ENCODE measurements at regions of chr2 and their contacts with region 1.

Region 1: GRCh38 chr2:20962939-20963557 is 80.8 kb downstream of the APOB start:
- DNase-seq: peak; percentile 69
- H3K4me3 ChIP-seq: no peak overlapping the region
- H3K27ac ChIP-seq: no peak overlapping the region
- H3K4me1 ChIP-seq: no peaks in the 10 kb centered on the region
- H3K27me3 ChIP-seq: peaks cover 8% of the 10 kb centered on the region
- CTCF ChIP-seq: peak; percentile 82 to 87 (median 85)
- EP300 ChIP-seq: no peak
- POLR2A ChIP-seq: no peak

Region 2: GRCh38 chr2:20378792-20379519 is 584.1 kb before region 1 on chr2:
- in situ Hi-C with region 1: loop called in 1 of 4 experiments (anchors 25 kb)
- intact Hi-C with region 1: no loop called
- DNase-seq: peak; percentile 83
- H3K4me3 ChIP-seq: no peak overlapping the region
- H3K27ac ChIP-seq: peak overlapping the region; percentile 62 to 75 (median 68)
- H3K4me1 ChIP-seq: peaks cover 14 to 35% (median 27%) of the 10 kb centered on the region in 4 donors
- H3K27me3 ChIP-seq: no peaks in the 10 kb centered on the region
- CTCF ChIP-seq: peak; percentile 63 to 77 (median 77)
- EP300 ChIP-seq: no peak
- POLR2A ChIP-seq: no peak

Region 3: DNA sequence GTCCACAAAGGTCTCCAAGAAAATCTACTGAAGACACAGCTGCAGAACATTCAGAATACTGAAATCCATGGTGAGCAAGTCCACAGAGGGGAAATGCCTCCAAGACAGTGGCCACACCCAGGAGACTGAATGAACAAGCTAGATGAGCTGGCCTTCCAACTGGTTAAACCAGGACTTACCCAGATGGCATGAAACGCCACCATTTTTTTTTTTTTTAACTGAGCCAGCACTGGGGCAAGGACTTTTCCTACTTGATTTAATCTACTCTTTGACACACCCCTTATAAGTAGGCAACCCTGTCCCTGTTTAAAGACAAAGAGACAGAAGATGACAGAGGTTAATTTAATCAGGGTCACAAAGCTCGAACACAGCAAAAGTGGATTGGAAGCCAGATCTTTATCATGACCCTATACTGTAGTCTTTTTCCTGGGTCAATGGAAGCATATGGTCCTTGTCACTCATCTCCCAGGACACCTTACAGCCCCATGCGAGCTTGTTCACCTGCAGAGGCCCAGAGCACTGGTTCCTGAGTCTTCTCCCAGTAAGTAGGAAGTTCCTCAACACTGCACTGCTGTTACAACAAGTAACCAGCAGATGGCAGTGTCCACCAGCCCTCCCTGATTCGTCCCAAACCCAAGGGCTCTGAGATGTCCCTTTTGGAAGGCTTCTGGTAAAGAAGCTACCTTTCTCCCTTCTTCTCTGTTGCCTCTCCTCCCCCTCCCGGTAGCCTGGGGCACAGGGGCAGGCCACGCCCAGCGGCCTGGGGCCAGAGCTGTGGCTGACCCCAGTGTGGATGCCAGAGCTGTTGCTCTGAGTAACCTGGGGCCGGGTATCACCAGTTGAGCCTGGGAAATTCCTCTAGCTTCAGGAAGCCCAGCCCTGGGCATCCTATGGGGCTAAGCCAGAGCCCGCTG is 301.7 kb before region 1 on chr2:
- in situ Hi-C with region 1: loop called (anchors 5 to 10 kb)
- intact Hi-C with region 1: loop called (anchors 1 kb)
- DNase-seq: peak; percentile 73
- H3K4me3 ChIP-seq: no peak overlapping the region
- H3K27ac ChIP-seq: no peak overlapping the region
- H3K4me1 ChIP-seq: peaks cover 12 to 19% (median 13%) of the 10 kb centered on the region in 4 donors
- H3K27me3 ChIP-seq: peaks cover 63% of the 10 kb centered on the region
- CTCF ChIP-seq: peak; percentile 93 to 99 (median 96)
- EP300 ChIP-seq: no peak
- POLR2A ChIP-seq: no peak

Region 4: DNA sequence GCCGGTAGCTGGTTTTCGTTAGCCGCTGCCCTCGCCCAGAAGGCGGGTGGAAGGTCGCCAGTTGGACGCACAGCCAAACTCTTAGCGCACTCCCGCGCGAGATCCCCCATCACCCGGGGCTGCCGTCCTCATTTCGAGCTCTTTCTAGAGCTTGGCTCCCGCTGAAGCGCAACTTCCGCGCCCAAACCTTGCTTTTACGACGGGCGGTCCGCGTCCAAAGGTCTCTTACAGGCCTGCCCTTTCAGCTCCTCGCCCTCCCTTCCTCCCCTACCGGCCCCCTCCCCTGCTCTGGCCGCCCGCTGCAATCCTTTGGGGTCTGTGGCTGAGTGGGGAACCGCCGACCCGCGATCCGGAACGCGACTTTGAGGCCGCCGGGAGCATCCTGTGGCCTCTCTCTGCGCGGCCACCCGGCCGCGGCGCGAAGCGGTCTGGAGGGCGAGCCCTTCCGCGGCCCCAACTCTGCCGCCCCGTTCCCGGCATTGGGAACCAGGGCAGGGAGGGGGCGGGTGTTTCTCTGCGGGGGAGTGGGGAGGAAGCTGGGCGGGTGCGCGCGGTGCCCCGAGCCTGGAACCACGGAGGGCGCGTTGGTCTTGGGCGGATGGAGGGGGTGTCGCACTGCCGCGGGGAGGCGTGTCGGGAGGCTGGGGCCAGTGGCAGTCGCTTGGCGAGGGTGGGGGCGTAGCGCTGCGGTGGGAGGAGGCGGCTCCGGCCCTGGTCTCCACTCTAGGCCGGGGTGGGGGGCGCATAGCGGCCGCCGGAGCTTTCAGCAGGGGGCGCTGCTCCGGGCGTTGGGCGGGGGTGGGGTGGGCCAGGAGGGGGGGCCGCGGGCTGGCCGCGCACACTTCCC is 296.5 kb before region 1 on chr2 and contains the start of gene GDF7:
- in situ Hi-C with region 1: loop called (anchors 5 to 10 kb)
- intact Hi-C with region 1: loop called (anchors 2 kb)
- DNase-seq: peak; percentile 60
- H3K4me3 ChIP-seq: peak within 1 kb of the TSS; percentile 19 to 55 (median 34)
- H3K27ac ChIP-seq: peak within 1 kb of the TSS in 1 of 4 donors; percentile 43
- H3K4me1 ChIP-seq: peaks cover 16 to 38% (median 24%) of the 10 kb centered on the region in 4 donors
- H3K27me3 ChIP-seq: peaks cover 98% of the 10 kb centered on the region
- CTCF ChIP-seq: peak in 1 of 5 experiments; percentile 9
- EP300 ChIP-seq: no peak
- POLR2A ChIP-seq: no peak
- total RNA-seq, gene GDF7: 0.20 to 1.1 (median 0.58) TPM

Region 5: DNA sequence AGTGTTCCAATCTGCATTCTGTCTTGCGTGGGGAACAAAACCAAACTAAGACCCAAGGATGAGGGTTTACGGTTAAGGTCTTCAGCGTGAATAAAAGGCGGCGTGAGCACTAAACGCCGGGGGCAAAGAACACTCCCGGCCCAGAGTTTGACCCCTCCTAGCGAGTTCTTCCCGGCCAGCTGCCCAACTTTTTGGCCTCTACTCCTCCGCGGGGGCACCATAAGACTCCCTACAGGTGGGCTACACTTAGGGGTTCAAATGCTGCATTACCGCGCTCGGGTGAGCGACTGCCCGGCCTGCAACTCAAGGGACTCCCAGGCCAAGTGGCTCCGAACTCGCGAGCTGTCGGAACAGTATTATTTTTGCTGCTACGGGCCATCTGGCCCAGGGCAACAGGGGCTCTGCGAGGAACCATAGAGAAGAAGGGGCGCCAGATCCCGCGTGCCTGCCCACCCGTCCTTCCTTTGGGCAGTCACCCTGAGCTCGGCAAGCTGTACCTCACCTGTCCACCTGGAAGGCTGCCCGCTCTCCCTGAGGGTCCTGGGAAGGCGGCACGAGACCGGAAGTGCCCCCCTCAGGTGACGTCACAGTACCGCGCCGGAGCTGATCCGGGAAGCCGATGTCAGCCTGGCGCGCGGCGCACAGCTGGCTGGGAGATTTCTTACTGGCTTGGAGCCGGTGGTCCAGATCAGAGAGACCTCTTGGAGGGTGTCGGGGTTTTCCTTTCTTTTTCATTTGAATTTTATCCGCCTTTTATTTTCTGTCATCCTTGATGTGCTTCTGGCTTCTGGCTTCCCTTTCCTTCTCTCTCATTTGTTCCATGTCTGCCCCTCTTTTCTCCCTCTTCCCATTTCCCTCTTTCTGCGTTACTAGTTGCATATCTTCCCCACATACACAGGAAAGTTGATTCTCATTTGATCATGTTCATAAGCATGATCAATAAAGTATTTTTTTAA is 140.2 kb before region 1 on chr2 and contains the start of gene LDAH:
- in situ Hi-C with region 1: no loop called
- intact Hi-C with region 1: loop called (anchors 10 kb)
- DNase-seq: peak; percentile 93
- H3K4me3 ChIP-seq: peak within 1 kb of the TSS; percentile 58 to 69 (median 66)
- H3K27ac ChIP-seq: peak within 1 kb of the TSS; percentile 89 to 93 (median 92)
- H3K4me1 ChIP-seq: peaks cover 0 to 7% (median 3%) of the 10 kb centered on the region in 4 donors
- H3K27me3 ChIP-seq: peaks cover 7% of the 10 kb centered on the region
- CTCF ChIP-seq: no peak
- EP300 ChIP-seq: peak; percentile 67
- POLR2A ChIP-seq: peak; percentile 61
- total RNA-seq, gene LDAH: 7.5 to 58.5 (median 15.2) TPM